GM12878 (cell line): ENCODE measurements at regions of chr18 and their contacts with region 1.

Region 1: GRCh38 chr18:76922107-76922506 is 99.8 kb downstream of the ZNF236 start:
- DNase-seq: peak; percentile 26
- ATAC-seq: peak; percentile 100
- H3K4me3 ChIP-seq: no peak overlapping the region
- H3K27ac ChIP-seq: no peak overlapping the region
- H3K4me1 ChIP-seq: no peaks in the 10 kb centered on the region
- H3K27me3 ChIP-seq: no peaks in the 10 kb centered on the region
- CTCF ChIP-seq: peak; percentile 81 to 83 (median 81)
- EP300 ChIP-seq: peak in 1 of 2 experiments; percentile 12; a peak in 1 of 4 replicates
- POLR2A ChIP-seq: no peak
- RAD21 ChIP-seq: peak; percentile 92

Region 2: DNA sequence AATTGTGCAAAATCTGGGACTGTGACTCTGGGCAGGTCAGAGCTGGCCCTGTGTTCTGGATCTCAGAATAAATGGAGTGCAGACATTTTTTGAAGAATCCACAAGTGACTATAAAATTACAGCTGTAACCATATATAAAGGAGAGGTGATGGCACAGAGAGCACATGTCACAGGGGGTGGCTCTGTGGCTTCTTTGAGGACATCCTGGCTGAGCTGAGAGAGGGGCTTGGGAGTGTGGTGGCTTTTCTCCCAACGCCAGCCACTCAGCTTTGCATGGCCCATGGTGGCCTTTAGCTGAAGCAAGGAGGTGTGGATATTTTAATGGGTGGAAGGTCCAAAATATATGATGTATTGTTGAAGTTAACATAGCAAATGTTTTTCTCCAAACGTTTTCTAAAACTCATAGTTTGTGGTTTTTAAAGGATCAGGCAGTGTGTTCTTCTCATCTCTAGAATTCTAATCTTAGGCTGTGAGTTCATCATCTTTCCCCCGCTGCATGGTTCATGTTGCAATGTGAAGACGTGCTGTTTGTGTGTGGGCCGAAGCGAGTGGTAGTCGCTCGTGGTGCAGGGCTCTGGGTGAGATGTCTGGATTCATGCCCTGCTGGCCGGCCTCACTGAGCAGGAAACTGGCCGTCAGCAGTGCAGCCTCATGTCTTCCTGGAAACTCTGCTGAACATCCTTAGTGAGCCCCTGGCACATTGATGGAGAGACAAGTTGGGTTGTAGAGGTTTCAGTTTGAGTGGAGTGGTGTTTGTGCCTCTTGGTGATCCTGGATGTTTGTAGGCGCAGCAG is 10.1 kb after region 1 on chr18:
- CTCF ChIA-PET with region 1: interaction called, 18 read pairs
- POLR2A ChIA-PET with region 1: no interaction called
- RAD21 ChIA-PET with region 1: no interaction called
- SMC1A ChIA-PET with region 1: interaction called, 6 read pairs
- in situ Hi-C with region 1: no loop called
- intact Hi-C with region 1: no loop called
- DNase-seq: no peak
- ATAC-seq: no peak
- H3K4me3 ChIP-seq: no peak overlapping the region
- H3K27ac ChIP-seq: no peak overlapping the region
- H3K4me1 ChIP-seq: peaks cover 25% of the 10 kb centered on the region
- H3K27me3 ChIP-seq: no peaks in the 10 kb centered on the region
- CTCF ChIP-seq: no peak
- EP300 ChIP-seq: no peak
- POLR2A ChIP-seq: no peak
- RAD21 ChIP-seq: no peak

Region 3: DNA sequence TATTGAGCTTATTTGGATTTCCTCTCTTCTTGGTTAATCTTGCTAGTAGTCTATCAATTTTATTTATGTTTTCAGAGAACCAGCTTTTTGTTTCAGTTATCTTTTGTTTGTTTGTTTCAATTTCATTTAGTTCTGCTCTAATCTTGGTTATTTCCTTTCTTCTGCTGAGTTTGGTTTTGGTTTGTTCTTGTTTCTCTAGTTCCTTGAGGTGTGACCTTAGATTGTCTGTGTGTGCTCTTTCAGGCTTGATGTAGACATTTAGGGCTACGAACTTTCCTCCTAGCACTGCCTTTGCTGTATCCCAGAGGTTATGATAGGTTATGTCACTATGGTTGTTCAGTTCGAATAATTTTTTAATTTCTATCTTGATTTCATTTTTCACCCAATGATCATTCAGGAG is 41.8 kb after region 1 on chr18:
- CTCF ChIA-PET with region 1: interaction called, 29 read pairs
- POLR2A ChIA-PET with region 1: no interaction called
- RAD21 ChIA-PET with region 1: interaction called, 5 read pairs
- SMC1A ChIA-PET with region 1: interaction called, 12 read pairs
- in situ Hi-C with region 1: no loop called
- intact Hi-C with region 1: no loop called
- DNase-seq: no peak
- ATAC-seq: peak; percentile 63
- H3K4me3 ChIP-seq: 0 out of 2 replicates have a peak overlapping the region, but pooled peaks have one; percentile 17
- H3K27ac ChIP-seq: peak overlapping the region; percentile 46
- H3K4me1 ChIP-seq: peaks cover 21% of the 10 kb centered on the region
- H3K27me3 ChIP-seq: no peaks in the 10 kb centered on the region
- CTCF ChIP-seq: no peak
- EP300 ChIP-seq: no peak
- POLR2A ChIP-seq: no peak
- RAD21 ChIP-seq: no peak

Region 4: DNA sequence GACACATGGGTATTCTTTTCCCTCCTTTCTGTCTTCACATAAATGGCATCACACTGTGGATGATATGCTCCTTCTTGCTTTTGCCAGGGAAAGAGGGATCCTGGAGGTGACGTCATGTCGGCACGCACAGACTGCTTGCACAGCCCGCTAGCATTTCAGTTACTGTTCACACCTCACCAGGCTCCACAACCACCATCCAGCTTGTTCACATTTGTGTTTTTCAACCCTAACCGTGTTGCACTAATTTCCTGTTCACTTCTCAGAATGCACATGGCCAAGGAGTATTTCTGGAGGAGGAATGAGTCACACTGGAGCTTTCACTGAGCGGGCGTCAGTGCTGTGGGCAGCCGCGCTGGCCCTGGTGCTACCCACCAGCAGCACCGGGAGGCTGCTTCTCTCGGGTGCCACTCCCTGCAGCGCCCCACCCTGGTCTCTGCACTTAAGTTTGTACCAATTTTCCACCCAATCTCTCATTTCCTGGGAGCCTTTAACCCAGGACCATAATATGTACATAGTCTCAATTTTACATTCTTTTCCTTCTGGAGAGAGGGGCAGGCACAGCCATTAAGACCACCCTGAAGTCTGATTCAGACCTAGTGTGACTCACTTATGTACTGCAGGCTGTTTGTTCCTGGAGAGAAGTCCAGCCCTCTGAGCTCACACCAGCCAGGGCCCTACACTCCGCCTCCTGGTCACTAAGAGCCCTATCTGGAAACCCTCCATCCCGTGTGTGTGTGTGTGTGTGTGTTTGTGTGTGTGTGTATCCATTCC is 145.4 kb after region 1 on chr18:
- CTCF ChIA-PET with region 1: no interaction called
- POLR2A ChIA-PET with region 1: no interaction called
- RAD21 ChIA-PET with region 1: no interaction called
- SMC1A ChIA-PET with region 1: no interaction called
- in situ Hi-C with region 1: no loop called
- intact Hi-C with region 1: no loop called
- DNase-seq: peak; percentile 59
- ATAC-seq: peak; percentile 68
- H3K4me3 ChIP-seq: peak overlapping the region; percentile 23; the same call in 1 of the 2 replicates
- H3K27ac ChIP-seq: peak overlapping the region; percentile 97
- H3K4me1 ChIP-seq: peaks cover 71% of the 10 kb centered on the region
- H3K27me3 ChIP-seq: no peaks in the 10 kb centered on the region
- CTCF ChIP-seq: peak; percentile 15 to 18 (median 16); a peak in 2 of 6 replicates
- EP300 ChIP-seq: no peak
- POLR2A ChIP-seq: no peak
- RAD21 ChIP-seq: no peak

Region 5: GRCh38 chr18:77650799-77651385 is 728.8 kb after region 1 on chr18:
- CTCF ChIA-PET with region 1: no interaction called
- POLR2A ChIA-PET with region 1: no interaction called
- RAD21 ChIA-PET with region 1: no interaction called
- SMC1A ChIA-PET with region 1: no interaction called
- in situ Hi-C with region 1: no loop called
- intact Hi-C with region 1: loop called (anchors 5 kb)
- DNase-seq: no peak
- ATAC-seq: peak; percentile 77
- H3K4me3 ChIP-seq: no peak overlapping the region
- H3K27ac ChIP-seq: no peak overlapping the region
- H3K4me1 ChIP-seq: no peaks in the 10 kb centered on the region
- H3K27me3 ChIP-seq: no peaks in the 10 kb centered on the region
- CTCF ChIP-seq: peak; percentile 76 to 84 (median 82); a peak in 5 of 6 replicates
- EP300 ChIP-seq: no peak
- POLR2A ChIP-seq: no peak
- RAD21 ChIP-seq: peak; percentile 79

Region 6: DNA sequence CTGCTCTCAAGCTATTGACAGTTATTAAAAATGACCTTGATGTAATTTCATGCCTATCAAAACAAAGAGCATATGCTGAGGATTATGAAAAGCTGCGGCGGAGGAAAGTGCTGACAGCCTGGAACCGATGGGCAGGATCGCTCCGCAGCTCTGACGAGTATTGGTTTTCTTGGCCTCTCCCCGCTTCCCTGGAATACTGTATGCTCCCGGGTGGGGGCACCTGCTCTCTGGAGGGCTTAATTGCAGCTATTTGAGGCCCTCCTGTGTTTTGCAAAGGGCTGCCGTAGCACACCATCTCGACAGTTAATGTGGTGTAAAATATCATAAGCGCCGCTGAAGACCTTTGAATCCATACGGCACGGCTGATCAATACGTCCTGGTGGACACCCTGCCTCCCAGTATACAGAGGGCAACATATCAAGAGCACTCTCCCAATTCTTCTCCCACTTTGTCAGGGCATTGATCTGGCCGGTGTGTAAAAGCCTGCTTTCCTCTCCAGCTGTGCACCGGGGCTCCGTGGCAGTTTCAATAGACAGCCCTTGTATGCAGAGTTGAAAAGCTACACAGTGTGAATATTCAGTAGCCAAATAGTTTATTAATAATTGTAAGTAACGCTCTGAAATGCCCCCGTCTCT is 990.0 kb after region 1 on chr18:
- CTCF ChIA-PET with region 1: no interaction called
- POLR2A ChIA-PET with region 1: no interaction called
- RAD21 ChIA-PET with region 1: no interaction called
- SMC1A ChIA-PET with region 1: no interaction called
- in situ Hi-C with region 1: no loop called
- intact Hi-C with region 1: no loop called
- DNase-seq: no peak
- ATAC-seq: no peak
- H3K4me3 ChIP-seq: no peak overlapping the region
- H3K27ac ChIP-seq: no peak overlapping the region
- H3K4me1 ChIP-seq: no peaks in the 10 kb centered on the region
- H3K27me3 ChIP-seq: no peaks in the 10 kb centered on the region
- CTCF ChIP-seq: no peak
- EP300 ChIP-seq: no peak
- POLR2A ChIP-seq: no peak
- RAD21 ChIP-seq: no peak